GM13976 (cell line): ENCODE measurements at regions of chr1 and their contacts with region 1.

Region 1: DNA sequence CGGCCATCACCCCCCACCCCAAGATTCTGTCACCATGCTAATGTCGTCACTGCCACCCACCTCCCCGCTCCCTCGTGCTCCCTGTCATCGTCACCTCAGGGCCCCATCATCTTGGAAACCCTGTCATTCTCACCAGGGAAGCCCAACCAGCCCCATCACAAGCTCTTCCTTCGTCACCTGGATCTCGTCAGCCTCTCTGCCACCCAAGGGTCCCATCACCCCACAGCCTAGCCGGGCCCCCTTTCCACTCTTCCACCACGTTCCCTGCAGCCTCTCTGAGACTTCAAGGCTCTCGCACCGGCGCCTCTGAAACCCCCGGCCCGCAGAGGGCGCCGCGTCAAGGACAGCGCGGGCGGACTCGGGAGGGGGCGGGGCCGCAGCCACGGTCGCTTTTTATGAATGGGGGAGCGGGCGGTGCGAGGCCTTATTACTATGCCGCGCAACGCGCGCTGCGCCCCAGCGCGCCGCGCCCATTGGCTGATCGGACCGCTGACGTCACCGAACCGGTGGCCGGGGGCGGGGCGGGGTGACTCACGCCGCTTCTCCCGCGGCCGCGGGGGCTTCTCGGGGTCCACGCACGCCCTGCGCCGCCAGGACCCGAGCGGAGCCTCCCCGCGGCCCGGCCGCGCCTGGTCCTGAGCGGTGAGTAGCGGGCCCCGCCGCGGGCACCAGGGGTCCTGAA is at the start of gene GPR3:
- DNase-seq: peak; percentile 96
- CTCF ChIP-seq: peak; percentile 62

Region 2: DNA sequence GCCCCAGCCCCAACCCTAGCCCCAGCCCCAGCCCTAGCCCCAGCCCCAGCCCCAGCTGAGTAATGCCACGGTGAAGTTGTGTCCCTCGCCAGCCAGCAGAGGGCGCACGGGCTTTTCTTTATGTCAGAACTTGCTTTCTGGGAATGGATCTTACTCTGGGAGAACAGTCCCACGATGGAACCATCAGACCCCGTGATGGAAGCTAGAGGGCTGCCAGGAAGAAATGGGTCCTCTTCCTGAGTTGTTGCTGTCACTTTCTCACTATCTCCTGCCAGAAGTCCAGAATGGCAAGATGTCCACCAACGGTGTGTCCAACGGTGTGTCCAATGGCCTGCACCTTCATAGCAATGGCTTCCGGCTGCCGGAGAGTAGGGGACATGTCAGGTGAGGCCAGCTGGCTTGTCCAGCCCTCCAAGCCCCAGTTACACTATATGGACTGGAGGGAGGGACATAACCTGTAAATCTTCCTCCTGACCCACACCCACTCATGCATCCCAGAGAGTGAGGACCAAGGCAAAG is 95.4 kb before region 1 on chr1:
- in situ Hi-C with region 1: loop called (anchors 5 kb)
- DNase-seq: peak; percentile 79
- CTCF ChIP-seq: peak; percentile 75

Region 3: DNA sequence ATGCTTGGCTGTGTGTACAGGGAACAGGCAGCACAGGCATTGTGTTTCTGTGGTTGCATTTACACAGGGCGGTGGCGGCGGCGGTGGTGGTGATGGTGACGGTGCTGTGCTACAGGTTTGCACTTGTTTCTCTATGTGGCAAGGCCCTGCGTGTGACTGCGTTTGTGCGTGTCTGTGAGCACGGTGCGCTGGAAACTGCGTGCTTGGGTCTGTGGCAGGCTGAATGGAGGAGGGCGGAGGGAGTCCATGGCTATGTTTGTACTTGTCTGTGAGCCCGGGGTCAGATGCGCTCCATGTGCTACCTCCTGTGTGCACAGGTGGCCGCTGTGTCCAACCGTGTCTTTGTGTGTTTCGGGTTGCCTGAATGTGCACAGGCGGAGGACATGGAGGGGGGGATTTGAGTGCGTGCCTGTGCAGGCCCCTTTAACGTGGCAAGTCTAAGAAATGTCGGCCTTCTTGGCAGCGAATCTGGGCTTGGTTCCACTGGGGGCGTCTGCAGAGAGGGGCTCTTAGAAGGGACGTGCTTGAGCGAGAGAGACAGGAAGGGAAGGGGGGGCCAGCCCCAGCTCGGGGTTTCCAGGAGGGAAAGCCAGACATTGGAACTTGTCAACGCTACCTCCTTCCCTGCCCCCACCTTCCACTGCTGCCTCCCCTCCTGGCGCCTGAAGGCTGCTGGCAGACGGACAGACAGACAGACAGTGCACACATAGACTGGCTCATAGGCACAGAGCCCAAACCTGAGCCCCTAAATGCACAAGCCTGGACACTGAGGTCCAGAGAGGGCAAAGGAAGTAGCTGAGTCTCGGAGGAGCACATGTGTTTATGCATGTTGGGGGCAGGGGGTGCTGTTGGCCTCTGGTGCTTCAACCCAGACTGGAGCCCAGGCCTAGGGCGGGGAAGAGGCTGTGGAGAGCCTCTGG is 130.5 kb after region 1 on chr1:
- in situ Hi-C with region 1: no loop called
- DNase-seq: no peak
- CTCF ChIP-seq: no peak

Region 4: DNA sequence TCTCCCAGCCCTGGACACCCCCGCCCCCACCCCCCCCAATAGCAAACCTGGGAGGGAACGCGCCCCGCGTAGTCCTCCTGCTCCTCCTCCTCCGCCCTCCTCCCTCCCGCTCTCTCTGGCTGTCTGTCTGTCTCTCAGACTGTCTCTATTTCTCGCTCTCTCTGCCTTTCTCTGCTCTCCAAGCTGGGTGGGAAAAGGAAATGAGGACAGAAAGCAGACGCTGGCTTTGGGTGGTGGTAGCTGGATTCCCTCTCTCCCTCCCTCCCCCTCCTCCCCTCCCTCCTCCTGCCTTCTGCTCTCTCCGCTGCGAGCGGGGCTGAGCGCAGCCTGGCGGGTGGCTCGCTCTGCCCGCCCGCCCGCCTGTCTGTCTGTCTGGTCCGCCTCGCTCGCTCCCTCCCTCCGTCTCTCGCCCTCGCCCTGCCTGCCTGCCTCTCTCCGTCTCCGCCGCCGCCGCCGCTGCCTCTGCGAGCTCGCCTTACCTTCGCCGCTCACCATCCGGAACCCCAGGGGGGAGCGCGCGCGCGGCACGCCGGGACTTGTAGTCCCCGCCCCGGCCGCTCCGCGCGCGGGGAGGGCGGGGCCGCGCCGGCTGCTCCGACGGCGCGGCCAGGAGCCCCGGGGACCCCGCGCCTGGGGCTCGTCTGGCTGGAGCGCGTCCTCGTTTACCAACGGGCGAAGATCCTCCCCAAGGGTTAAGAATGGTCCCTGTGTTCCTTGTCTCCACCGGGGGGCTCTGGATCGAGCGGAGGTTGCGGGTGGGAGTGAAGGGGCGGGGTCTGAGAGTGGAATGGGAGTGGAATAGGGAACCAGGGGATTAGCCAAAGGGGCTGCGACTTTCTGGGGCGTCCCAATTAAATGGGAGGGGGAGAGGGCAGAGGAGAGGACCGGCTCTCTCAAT is 211.7 kb after region 1 on chr1 and contains the start of gene AHDC1:
- in situ Hi-C with region 1: loop called (anchors 10 kb)
- DNase-seq: peak; percentile 96
- CTCF ChIP-seq: no peak

Region 5: DNA sequence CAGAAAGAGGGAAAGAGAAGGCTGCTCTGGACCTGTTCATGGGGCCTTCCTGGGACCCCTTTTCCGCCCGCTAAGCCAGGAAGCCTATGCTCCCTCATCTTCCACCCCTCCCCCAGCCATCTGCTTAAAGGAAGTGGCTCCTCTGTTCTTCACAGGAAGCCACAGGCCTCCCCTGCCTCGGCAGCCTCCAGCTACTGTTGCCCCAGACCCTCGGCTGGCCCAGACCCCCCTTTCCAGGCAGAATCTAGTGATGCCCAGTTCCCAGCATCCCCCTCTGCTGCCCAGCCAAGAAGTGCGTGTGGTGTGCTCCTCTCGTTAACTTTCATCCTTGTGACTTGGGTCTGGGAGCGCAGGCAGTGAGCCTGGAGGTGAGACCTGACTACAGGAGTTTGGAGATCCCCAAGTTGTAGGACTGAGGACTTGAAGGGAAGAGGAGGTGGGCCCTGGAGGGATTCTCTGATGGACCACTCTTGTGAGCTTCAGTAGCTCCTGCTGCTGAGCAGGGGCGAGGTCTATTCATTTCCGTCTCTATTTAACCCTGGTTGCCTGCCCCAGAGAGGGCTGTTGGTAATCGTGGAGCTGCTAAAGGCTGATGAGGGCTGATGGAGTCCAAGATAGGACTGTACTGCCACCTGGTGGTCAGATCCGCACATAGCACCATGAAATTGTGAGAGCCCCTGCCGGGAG is 270.6 kb after region 1 on chr1:
- in situ Hi-C with region 1: loop called (anchors 10 kb)
- DNase-seq: peak; percentile 79
- CTCF ChIP-seq: peak; percentile 83